ENCODE measurements at regions of chr7 and their contacts with region 1.

Region 1: GRCh38 chr7:1432411-1433082 is 26.7 kb downstream of the MICALL2 start:
- DNase-seq: peak in 1 of 2 experiments; percentile 77
- H3K4me3 ChIP-seq: no peak overlapping the region
- H3K27ac ChIP-seq: no peak overlapping the region
- H3K4me1 ChIP-seq: no peaks in the 10 kb centered on the region
- H3K27me3 ChIP-seq: no peaks in the 10 kb centered on the region
- CTCF ChIP-seq: peak; percentile 98

Region 2: DNA sequence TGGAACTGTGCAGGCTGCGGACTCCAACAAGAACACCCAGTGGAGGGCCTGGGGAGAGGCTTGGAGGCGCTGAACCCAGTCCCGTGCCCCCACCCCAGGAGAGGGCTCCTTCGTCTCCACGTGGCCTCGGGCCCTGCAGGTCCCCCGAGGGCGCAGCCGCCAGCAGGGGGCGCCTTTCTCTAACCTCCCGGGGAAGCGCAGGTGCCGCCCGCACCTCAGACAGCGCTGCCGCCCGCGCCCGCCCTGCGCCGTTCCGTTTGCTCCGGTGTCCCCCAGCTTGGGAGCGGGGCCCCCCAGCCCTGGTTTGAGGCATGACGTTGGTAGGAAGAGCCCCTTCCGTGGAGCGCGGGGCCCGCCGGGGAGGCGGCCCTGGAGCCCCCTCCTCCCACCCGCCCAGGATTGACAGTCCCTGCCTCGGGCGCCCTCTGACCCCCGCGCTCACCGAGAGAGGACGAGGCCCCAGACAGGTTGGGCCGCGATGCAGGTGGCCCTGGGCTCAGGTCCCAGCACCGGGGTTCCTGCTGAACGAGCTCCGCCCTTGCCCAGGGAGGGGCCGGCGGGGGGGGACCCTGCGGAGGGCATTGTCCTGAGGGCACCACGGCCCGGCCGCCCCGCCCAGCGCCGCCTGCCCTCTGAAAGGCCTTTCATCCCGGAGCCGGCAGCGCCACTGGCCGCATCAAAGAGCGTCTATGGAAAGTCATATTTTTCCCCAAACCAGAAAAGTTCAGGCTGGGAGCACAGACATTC is 1099.7 kb before region 1 on chr7:
- CTCF ChIA-PET with region 1: no interaction called
- POLR2A ChIA-PET with region 1: no interaction called
- intact Hi-C with region 1: no loop called
- DNase-seq: peak in 1 of 2 experiments; percentile 91
- H3K4me3 ChIP-seq: peak overlapping the region; percentile 58; the same call in 1 of the 2 replicates
- H3K27ac ChIP-seq: no peak overlapping the region
- H3K4me1 ChIP-seq: peaks cover 9% of the 10 kb centered on the region; the same call in 1 of the 2 replicates
- H3K27me3 ChIP-seq: peaks cover 47% of the 10 kb centered on the region
- CTCF ChIP-seq: peak; percentile 87

Region 3: GRCh38 chr7:1210979-1211608 is 221.5 kb before region 1 on chr7:
- CTCF ChIA-PET with region 1: interaction called, 16 read pairs
- POLR2A ChIA-PET with region 1: no interaction called
- intact Hi-C with region 1: no loop called
- DNase-seq: no peak
- H3K4me3 ChIP-seq: no peak overlapping the region
- H3K27ac ChIP-seq: no peak overlapping the region
- H3K4me1 ChIP-seq: no peaks in the 10 kb centered on the region
- H3K27me3 ChIP-seq: peaks cover 76% of the 10 kb centered on the region
- CTCF ChIP-seq: no peak

Region 4: DNA sequence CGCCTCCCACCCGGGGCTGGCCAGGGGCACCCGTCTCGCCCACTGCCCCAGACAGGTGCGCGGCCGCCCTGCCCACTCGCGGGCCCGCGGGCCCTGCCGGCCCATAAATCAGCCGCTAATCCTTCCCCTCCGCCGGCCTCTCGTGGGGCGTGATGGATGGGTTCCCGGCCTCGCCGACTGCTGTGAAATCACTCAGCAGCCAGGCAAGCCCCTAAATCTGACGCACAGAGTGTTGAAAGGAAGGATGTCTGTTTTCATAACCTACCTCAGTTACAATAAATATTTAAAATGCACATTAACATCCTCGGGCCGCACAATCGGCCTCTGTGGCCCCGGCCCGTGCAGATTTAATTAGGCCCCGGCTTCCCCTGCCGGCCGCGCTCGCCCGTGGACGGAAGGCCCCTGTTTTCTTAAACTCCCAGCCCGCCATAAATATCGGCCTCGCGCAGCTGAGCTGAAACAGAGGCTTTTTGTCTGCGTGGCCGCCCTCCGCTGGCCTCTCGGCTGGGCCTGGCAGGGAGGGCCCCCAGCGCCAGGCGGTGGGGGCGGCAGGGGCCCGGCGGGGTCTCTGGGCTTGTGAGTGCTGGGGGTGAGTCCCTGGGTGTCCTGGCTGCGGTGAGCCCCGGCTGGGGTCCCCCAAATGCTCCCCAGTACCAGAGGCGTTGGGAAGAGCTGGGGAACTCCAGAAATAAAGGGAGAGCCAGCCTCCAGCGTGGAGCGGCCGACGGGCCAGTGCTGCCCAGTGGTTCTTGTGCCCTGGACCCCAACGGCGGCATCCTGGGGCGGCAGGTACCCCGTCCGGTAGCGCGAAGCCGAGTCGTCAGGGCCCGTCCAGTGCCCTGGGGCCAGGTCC is 109.1 kb before region 1 on chr7:
- CTCF ChIA-PET with region 1: no interaction called
- POLR2A ChIA-PET with region 1: no interaction called
- intact Hi-C with region 1: no loop called
- DNase-seq: no peak
- H3K4me3 ChIP-seq: no peak overlapping the region
- H3K27ac ChIP-seq: no peak overlapping the region
- H3K4me1 ChIP-seq: no peaks in the 10 kb centered on the region
- H3K27me3 ChIP-seq: peaks cover 78% of the 10 kb centered on the region
- CTCF ChIP-seq: no peak

Region 5: DNA sequence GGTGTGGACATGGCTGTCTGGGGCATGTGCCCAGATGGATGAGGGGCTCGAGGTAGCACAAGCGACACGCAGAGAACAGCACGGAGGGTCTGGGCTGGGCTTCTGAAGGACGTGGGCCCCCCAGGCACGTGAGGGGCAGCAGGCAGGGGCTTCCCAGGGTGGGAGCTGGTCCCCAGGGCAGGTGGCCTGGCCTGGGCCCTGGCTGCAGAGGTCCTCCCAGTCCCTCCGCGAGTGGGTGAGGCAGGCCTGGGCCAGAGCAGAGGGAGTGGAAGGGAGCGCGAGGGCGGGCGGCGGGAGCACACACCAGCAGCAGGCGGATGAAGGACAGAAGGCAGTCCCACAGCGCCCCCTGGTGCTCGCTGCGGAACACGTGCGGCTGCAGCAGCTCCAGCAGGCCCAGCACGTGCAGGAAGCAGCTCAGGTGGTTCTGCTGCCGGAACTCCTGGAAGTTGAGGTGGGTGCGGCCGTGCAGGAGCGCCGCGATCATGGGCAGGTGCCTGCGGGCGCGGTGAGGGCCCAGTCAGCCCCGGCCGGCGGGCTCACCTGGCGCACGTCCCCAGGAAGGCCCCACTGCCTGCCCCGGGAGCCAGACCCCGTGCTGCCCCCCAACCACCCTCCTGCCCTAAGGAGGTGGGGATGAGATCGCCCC is 41.4 kb after region 1 on chr7:
- CTCF ChIA-PET with region 1: no interaction called
- POLR2A ChIA-PET with region 1: no interaction called
- intact Hi-C with region 1: loop called (anchors 1 kb)
- DNase-seq: peak; percentile 73 to 95
- H3K4me3 ChIP-seq: no peak overlapping the region
- H3K27ac ChIP-seq: no peak overlapping the region
- H3K4me1 ChIP-seq: no peaks in the 10 kb centered on the region
- H3K27me3 ChIP-seq: no peaks in the 10 kb centered on the region
- CTCF ChIP-seq: peak; percentile 95

Measured in PC-9 (cell line).